Calu3 (cell line): ENCODE measurements at regions of chr3 and their contacts with region 1.

Region 1: GRCh38 chr3:150495563-150496168 is 50.6 kb downstream of the SERP1 start:
- DNase-seq: peak; percentile 49
- H3K4me3 Mint-ChIP-seq: no peak overlapping the region
- H3K27ac Mint-ChIP-seq: peak overlapping the region; percentile 20
- H3K4me1 Mint-ChIP-seq: peaks cover 31% of the 10 kb centered on the region
- H3K27me3 Mint-ChIP-seq: no peaks in the 10 kb centered on the region
- CTCF ChIP-seq: peak; percentile 64

Region 2: GRCh38 chr3:150227839-150228238 is 267.8 kb before region 1 on chr3:
- CTCF ChIA-PET with region 1: interaction called, 12 read pairs
- intact Hi-C with region 1: loop called (anchors 2 kb)
- DNase-seq: peak; percentile 76
- H3K4me3 Mint-ChIP-seq: no peak overlapping the region
- H3K27ac Mint-ChIP-seq: no peak overlapping the region
- H3K4me1 Mint-ChIP-seq: no peaks in the 10 kb centered on the region
- H3K27me3 Mint-ChIP-seq: peaks cover 35% of the 10 kb centered on the region
- CTCF ChIP-seq: peak; percentile 87

Region 3: GRCh38 chr3:150286390-150287147 is 209.1 kb before region 1 on chr3:
- CTCF ChIA-PET with region 1: interaction called, 15 read pairs
- intact Hi-C with region 1: loop called (anchors 1 kb)
- DNase-seq: peak; percentile 45
- H3K4me3 Mint-ChIP-seq: no peak overlapping the region
- H3K27ac Mint-ChIP-seq: no peak overlapping the region
- H3K4me1 Mint-ChIP-seq: peaks cover 7% of the 10 kb centered on the region
- H3K27me3 Mint-ChIP-seq: no peaks in the 10 kb centered on the region
- CTCF ChIP-seq: peak; percentile 69

Region 4: GRCh38 chr3:150371741-150372254 is 123.9 kb before region 1 on chr3:
- CTCF ChIA-PET with region 1: no interaction called
- intact Hi-C with region 1: loop called (anchors 5 kb)
- DNase-seq: peak; percentile 91
- H3K4me3 Mint-ChIP-seq: peak overlapping the region; percentile 62
- H3K27ac Mint-ChIP-seq: peak overlapping the region; percentile 94
- H3K4me1 Mint-ChIP-seq: peaks cover 63% of the 10 kb centered on the region
- H3K27me3 Mint-ChIP-seq: no peaks in the 10 kb centered on the region
- CTCF ChIP-seq: no peak